GM10248 (cell line): ENCODE measurements at regions of chr15 and their contacts with region 1.

Region 1: DNA sequence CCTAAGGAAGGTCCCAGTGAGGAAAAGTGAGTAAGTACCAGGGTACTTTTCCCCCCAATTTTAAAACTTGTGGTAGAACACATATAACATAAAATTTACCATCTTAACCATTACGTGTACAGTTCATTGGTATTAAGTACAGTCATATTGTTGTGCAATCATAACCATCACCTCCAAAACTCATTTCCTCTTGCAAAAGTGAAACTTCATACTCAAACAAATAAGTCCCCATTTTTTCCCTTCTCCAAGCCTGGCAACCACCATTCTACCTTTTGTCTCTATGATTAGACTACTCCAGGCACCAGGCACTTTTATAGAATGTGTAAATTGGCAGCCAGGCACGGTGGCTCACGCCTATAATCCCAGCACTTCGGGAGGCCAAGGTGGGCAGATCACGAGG is 12.2 kb downstream of the PRC1 start:
- DNase-seq: no peak
- CTCF ChIP-seq: no peak

Region 2: DNA sequence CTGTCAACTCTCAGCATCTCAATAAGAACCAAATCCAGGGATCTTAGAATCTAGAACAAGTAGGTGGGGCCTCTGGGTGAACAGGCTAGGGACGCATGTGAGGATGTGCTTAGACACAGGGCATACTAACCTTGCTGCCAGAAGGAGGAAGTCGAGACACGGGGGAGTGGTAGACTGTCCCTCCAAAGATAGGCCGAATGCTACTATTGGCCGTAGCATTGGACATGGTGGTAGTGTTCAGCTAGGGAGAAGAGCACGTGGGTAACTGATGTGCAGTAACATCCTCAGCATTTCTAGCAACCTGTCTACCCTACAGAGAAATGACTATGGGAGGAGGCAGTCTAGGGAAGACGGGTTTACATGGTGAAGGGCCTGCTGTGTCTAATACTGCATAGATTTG is 11.9 kb before region 1 on chr15:
- CTCF ChIA-PET with region 1: interaction called, 22 read pairs
- POLR2A ChIA-PET with region 1: no interaction called
- DNase-seq: no peak
- CTCF ChIP-seq: no peak